Activated CD4-positive, alpha-beta memory T cell treated with anti-CD3 and anti-CD28 coated beads for 36 hours (primary cell): ENCODE measurements at regions of chr17 and their contacts with region 1.

Region 1: DNA sequence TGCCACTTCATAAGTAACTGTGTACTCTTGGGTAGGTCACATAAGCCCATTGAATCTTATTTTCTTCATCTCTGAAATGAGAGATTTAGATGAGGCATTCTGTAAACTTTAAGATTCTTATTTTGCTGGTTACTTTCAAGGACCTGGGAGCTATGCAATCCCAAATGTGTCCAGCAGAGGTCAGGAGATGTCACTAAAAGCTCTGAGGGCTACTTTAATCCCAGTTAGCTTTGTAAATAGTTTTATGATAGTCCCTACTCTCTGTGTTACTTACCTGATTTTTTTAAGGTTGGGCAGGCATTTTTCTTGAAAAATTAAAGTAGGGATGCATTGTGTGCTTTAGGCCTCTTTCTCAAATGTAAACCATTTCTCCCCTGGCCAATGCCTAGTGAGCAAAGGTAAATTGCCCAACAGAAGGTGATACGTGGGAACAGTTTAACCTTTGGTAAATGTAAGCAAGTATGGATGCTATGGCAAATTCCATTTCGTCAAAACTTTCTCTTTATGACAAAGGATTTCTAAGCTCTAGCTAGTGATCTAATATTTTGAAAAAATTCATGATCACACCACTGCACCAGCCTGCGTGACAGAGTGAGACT is 57.1 kb upstream of the WSB1 start:
- DNase-seq: peak; percentile 82
- H3K4me3 Mint-ChIP-seq: no peak overlapping the region
- H3K27ac Mint-ChIP-seq: no peak overlapping the region
- H3K4me1 Mint-ChIP-seq: peaks cover 15% of the 10 kb centered on the region
- H3K27me3 Mint-ChIP-seq: peaks cover 4% of the 10 kb centered on the region

Region 2: DNA sequence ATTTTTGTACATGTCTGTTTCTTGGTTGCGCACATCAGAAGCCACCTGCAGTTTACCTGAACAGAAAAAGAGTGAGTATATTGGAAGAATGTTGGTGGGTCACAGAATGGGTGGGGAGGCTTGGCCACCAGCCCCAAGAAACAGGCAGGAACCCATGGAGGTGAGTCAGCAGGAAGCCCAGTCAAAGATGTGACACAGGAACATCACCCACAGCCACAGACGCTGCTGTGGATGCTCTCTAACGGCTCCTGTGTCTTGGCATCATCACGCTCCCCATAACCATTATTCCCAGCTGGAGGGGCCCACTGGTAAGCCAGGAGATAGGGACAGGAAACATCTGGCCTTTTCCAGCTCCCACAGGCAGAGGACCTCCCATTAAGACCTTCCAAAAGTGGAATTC is 36.9 kb before region 1 on chr17:
- CTCF ChIA-PET with region 1: interaction called, 10 read pairs
- POLR2A ChIA-PET with region 1: no interaction called
- intact Hi-C with region 1: no loop called
- DNase-seq: no peak
- H3K4me3 Mint-ChIP-seq: no peak overlapping the region
- H3K27ac Mint-ChIP-seq: no peak overlapping the region
- H3K4me1 Mint-ChIP-seq: no peaks in the 10 kb centered on the region
- H3K27me3 Mint-ChIP-seq: no peaks in the 10 kb centered on the region

Region 3: GRCh38 chr17:27332485-27333409 is 95.9 kb after region 1 on chr17:
- CTCF ChIA-PET with region 1: interaction called, 219 read pairs
- POLR2A ChIA-PET with region 1: interaction called, 15 read pairs
- intact Hi-C with region 1: loop called (anchors 1 kb)
- DNase-seq: peak; percentile 95
- H3K4me3 Mint-ChIP-seq: peak overlapping the region; percentile 72
- H3K27ac Mint-ChIP-seq: peak overlapping the region; percentile 88
- H3K4me1 Mint-ChIP-seq: peaks cover 23% of the 10 kb centered on the region
- H3K27me3 Mint-ChIP-seq: no peaks in the 10 kb centered on the region

Region 4: DNA sequence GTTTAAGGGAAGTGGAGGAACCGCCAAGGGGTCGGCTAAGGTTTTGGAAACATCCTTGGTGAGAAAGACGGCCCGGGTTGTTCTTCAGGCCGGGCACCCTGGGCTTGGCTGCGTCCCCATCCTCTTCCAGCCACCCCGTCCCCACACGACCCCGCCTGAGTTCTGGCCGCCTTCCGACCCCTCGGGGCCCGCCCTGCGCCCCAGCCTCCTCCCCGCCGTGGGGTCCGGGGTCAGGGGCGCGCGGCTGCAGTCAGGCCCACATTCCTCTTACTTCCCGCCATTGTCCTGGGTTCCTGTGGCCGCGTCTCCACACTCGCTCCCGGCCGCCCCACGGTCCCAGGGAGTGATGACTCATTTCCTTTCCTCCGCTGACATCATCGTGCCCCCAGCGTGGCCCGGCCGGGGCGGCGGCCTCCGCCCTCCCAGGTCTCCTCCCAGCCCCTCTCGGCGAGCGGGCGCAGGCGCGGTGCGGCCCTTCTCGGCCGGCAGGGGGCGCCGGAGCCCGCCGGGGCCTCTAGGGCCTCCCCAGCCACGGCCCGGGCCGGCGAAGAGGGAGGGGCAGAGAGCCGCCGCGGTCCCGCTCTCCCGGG is 116.7 kb after region 1 on chr17:
- CTCF ChIA-PET with region 1: interaction called, 28 read pairs
- POLR2A ChIA-PET with region 1: no interaction called
- intact Hi-C with region 1: loop called (anchors 1 kb)
- DNase-seq: peak; percentile 93
- H3K4me3 Mint-ChIP-seq: peak overlapping the region; percentile 78
- H3K27ac Mint-ChIP-seq: peak overlapping the region; percentile 86
- H3K4me1 Mint-ChIP-seq: peaks cover 22% of the 10 kb centered on the region
- H3K27me3 Mint-ChIP-seq: no peaks in the 10 kb centered on the region

Region 5: DNA sequence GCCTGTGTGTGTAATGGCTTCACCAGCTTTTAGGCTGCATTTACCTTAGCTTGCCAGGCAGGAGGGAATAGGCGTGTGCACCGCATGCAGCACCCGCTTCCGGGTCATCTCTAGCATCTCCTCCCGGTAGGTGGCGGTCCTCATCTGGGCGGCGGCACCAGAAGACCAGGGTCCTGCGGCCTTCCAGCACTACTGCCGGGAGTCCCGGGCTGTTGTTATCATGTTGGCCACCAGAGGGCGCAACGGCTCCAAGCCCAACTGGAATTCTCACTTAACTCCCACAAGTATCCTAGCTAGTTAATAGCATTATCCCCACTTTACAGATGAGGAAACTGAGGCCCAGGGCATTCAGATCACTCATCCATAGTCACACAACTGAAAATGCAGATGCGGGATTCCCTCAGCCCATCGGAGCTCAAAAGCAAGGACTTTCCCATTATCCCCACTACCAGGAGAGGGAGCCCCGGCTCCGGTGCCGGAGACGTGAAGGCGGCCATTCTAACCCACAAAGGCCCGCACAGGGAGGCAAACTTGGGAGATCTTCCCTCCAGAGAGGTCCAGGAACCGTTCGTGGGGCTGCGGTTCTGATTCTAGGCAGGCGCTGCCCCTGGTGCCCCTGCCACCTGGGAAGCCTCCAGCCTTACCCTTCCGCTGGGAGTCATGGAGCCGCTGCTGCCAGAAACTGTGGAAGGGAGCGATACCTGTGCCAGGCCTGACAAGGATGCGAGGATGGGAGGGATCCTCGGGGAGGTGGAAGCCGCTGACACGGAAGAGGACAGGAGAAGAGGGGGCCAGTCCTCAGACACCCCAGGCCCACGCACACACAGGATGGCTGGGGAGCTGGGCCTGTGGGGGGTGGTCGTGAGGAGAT is 418.1 kb after region 1 on chr17:
- CTCF ChIA-PET with region 1: interaction called, 27 read pairs
- POLR2A ChIA-PET with region 1: no interaction called
- intact Hi-C with region 1: loop called (anchors 2 kb)
- DNase-seq: peak; percentile 83
- H3K4me3 Mint-ChIP-seq: no peak overlapping the region
- H3K27ac Mint-ChIP-seq: no peak overlapping the region
- H3K4me1 Mint-ChIP-seq: peaks cover 4% of the 10 kb centered on the region
- H3K27me3 Mint-ChIP-seq: no peaks in the 10 kb centered on the region